ENCODE measurements at regions of chr11 and their contacts with region 1.

Region 1: DNA sequence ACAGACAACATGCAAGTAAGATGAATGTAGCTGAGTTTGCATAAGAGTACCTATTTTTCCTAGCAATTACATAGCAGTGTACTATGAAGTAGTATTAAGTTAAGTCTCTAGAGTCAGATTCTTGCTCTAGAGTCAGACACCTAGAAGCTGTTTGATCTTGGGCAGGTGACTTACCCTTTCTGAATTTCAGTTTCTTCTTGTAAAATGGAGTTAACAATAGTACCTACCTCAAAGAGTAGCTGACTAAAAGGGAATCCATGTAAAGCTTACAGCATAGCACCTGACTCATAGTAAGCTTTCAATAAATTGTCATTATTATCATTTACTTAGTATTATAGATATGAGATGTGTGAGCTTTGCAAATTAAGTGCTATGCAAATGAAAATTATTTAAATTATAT is 47.8 kb upstream of the PTPRJ start:
- DNase-seq: no peak
- H3K4me3 Mint-ChIP-seq: no peak overlapping the region
- H3K27ac Mint-ChIP-seq: no peak overlapping the region
- H3K4me1 Mint-ChIP-seq: no peaks in the 10 kb centered on the region
- H3K27me3 Mint-ChIP-seq: no peaks in the 10 kb centered on the region
- CTCF ChIP-seq: no peak

Region 2: GRCh38 chr11:47775240-47775869 is 157.2 kb before region 1 on chr11:
- CTCF ChIA-PET with region 1: no interaction called
- POLR2A ChIA-PET with region 1: no interaction called
- intact Hi-C with region 1: no loop called
- DNase-seq: no peak
- H3K4me3 Mint-ChIP-seq: no peak overlapping the region
- H3K27ac Mint-ChIP-seq: no peak overlapping the region
- H3K4me1 Mint-ChIP-seq: no peaks in the 10 kb centered on the region
- H3K27me3 Mint-ChIP-seq: no peaks in the 10 kb centered on the region
- CTCF ChIP-seq: no peak

Region 3: GRCh38 chr11:47908221-47908620 is 24.3 kb before region 1 on chr11:
- CTCF ChIA-PET with region 1: interaction called, 12 read pairs
- POLR2A ChIA-PET with region 1: interaction called, 4 read pairs
- intact Hi-C with region 1: no loop called
- DNase-seq: peak; percentile 31
- H3K4me3 Mint-ChIP-seq: no peak overlapping the region
- H3K27ac Mint-ChIP-seq: no peak overlapping the region
- H3K4me1 Mint-ChIP-seq: no peaks in the 10 kb centered on the region
- H3K27me3 Mint-ChIP-seq: no peaks in the 10 kb centered on the region
- CTCF ChIP-seq: no peak

Region 4: GRCh38 chr11:47917643-47918369 is 14.7 kb before region 1 on chr11:
- CTCF ChIA-PET with region 1: interaction called, 29 read pairs
- POLR2A ChIA-PET with region 1: no interaction called
- intact Hi-C with region 1: no loop called
- DNase-seq: peak; percentile 50
- H3K4me3 Mint-ChIP-seq: no peak overlapping the region
- H3K27ac Mint-ChIP-seq: no peak overlapping the region
- H3K4me1 Mint-ChIP-seq: peaks cover 7% of the 10 kb centered on the region
- H3K27me3 Mint-ChIP-seq: no peaks in the 10 kb centered on the region
- CTCF ChIP-seq: no peak

Region 5: GRCh38 chr11:47946682-47947575 is 14.4 kb after region 1 on chr11:
- CTCF ChIA-PET with region 1: interaction called, 34 read pairs
- POLR2A ChIA-PET with region 1: interaction called, 3 read pairs
- intact Hi-C with region 1: no loop called
- DNase-seq: peak; percentile 99
- H3K4me3 Mint-ChIP-seq: no peak overlapping the region
- H3K27ac Mint-ChIP-seq: no peak overlapping the region
- H3K4me1 Mint-ChIP-seq: peaks cover 18% of the 10 kb centered on the region
- H3K27me3 Mint-ChIP-seq: no peaks in the 10 kb centered on the region
- CTCF ChIP-seq: no peak

Region 6: GRCh38 chr11:48097041-48097476 is 164.5 kb after region 1 on chr11:
- CTCF ChIA-PET with region 1: interaction called, 18 read pairs
- POLR2A ChIA-PET with region 1: no interaction called
- intact Hi-C with region 1: no loop called
- DNase-seq: peak; percentile 33
- H3K4me3 Mint-ChIP-seq: no peak overlapping the region
- H3K27ac Mint-ChIP-seq: no peak overlapping the region
- H3K4me1 Mint-ChIP-seq: peaks cover 5% of the 10 kb centered on the region
- H3K27me3 Mint-ChIP-seq: peaks cover 16% of the 10 kb centered on the region
- CTCF ChIP-seq: no peak

Measured in MCF 10A (cell line).